HCT116 (cell line): ENCODE measurements at regions of chr20 and their contacts with region 1.

Region 1: GRCh38 chr20:45971675-45972499 is at the start of gene ZNF335:
- DNase-seq: peak; percentile 95
- ATAC-seq: peak; percentile 85
- H3K4me3 ChIP-seq: peak within 1 kb of the TSS; percentile 94 to 97
- H3K27ac ChIP-seq: peak within 1 kb of the TSS; percentile 100
- H3K4me1 ChIP-seq: peaks cover 11 to 24% of the 10 kb centered on the region in 2 experiments; a peak in 3 of 4 replicates
- H3K27me3 ChIP-seq: no peaks in the 10 kb centered on the region
- CTCF ChIP-seq: no peak
- POLR2A ChIP-seq: no peak
- RAD21 ChIP-seq: no peak
- total RNA-seq, gene ZNF335: 20.8 TPM

Region 2: GRCh38 chr20:45545754-45546453 is 426.0 kb before region 1 on chr20:
- CTCF ChIA-PET with region 1: no interaction called
- POLR2A ChIA-PET with region 1: no interaction called
- RAD21 ChIA-PET with region 1: no interaction called
- intact Hi-C with region 1: loop called (anchors 10 kb)
- DNase-seq: peak; percentile 21
- ATAC-seq: peak; percentile 81
- H3K4me3 ChIP-seq: no peak overlapping the region
- H3K27ac ChIP-seq: no peak overlapping the region
- H3K4me1 ChIP-seq: no peaks in the 10 kb centered on the region
- H3K27me3 ChIP-seq: peaks cover 49% of the 10 kb centered on the region; the same call in 1 of the 2 replicates
- CTCF ChIP-seq: peak; percentile 24 to 61 (median 59); a peak in 4 of 6 replicates
- POLR2A ChIP-seq: no peak
- RAD21 ChIP-seq: peak; percentile 81

Region 3: GRCh38 chr20:45798935-45799642 is 172.8 kb before region 1 on chr20:
- CTCF ChIA-PET with region 1: interaction called, 11 read pairs
- POLR2A ChIA-PET with region 1: no interaction called
- RAD21 ChIA-PET with region 1: no interaction called
- intact Hi-C with region 1: no loop called
- DNase-seq: no peak
- ATAC-seq: peak; percentile 97
- H3K4me3 ChIP-seq: no peak overlapping the region
- H3K27ac ChIP-seq: no peak overlapping the region
- H3K4me1 ChIP-seq: no peaks in the 10 kb centered on the region
- H3K27me3 ChIP-seq: no peaks in the 10 kb centered on the region
- CTCF ChIP-seq: peak; percentile 35 to 75 (median 72); a peak in 5 of 6 replicates
- POLR2A ChIP-seq: no peak
- RAD21 ChIP-seq: peak; percentile 64

Region 4: DNA sequence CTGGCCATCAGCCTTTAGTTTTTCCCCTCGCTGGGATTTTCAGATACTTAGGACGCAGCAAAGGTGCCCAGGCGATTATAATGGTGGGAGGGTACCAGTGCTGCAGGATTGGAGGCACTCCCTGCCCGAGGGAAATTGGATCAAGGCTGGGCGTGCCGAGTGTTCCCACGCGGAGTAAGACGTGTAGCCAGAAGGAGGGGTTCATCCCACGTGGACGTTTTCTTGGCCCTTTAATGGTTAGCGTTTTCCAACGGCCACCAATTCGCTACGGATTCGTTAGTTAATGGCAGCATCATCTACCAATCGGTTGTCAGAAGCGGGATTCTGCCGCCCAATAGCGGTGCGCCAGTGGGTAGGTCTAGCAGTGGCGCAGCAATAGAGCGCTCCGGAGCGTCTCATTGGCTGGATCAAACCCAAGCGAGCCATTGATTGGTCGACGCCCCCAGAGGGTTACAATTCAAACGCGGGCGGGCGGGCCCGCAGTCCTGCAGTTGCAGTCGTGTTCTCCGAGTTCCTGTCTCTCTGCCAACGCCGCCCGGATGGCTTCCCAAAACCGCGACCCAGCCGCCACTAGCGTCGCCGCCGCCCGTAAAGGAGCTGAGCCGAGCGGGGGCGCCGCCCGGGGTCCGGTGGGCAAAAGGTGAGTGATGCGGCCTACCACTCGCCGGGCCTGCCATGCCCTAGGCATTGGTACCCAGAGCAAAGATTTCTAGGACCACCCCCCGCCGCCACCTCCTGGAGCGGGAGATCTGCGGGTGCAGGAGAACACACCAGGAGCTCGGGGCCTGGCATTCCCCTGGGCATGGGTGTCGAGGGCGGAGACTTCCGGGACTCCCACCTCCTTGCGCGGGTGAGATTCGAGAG is 159.5 kb before region 1 on chr20 and contains the start of gene UBE2C:
- CTCF ChIA-PET with region 1: interaction called, 5 read pairs
- POLR2A ChIA-PET with region 1: no interaction called
- RAD21 ChIA-PET with region 1: no interaction called
- intact Hi-C with region 1: loop called (anchors 5 kb)
- DNase-seq: peak; percentile 100
- ATAC-seq: peak; percentile 97
- H3K4me3 ChIP-seq: peak within 1 kb of the TSS; percentile 85 to 100
- H3K27ac ChIP-seq: peak within 1 kb of the TSS; percentile 93
- H3K4me1 ChIP-seq: peaks cover 21 to 31% of the 10 kb centered on the region in 2 experiments; a peak in 3 of 4 replicates
- H3K27me3 ChIP-seq: no peaks in the 10 kb centered on the region
- CTCF ChIP-seq: no peak
- POLR2A ChIP-seq: peak; percentile 26
- RAD21 ChIP-seq: no peak
- total RNA-seq, gene UBE2C: 205 TPM

Region 5: GRCh38 chr20:45934586-45935415 is 37.1 kb before region 1 on chr20 and contains the start of gene PCIF1:
- CTCF ChIA-PET with region 1: interaction called, 30 read pairs
- POLR2A ChIA-PET with region 1: interaction called, 36 read pairs
- RAD21 ChIA-PET with region 1: no interaction called
- intact Hi-C with region 1: no loop called
- DNase-seq: peak; percentile 93
- ATAC-seq: peak; percentile 79
- H3K4me3 ChIP-seq: peak within 1 kb of the TSS; percentile 94 to 97
- H3K27ac ChIP-seq: peak within 1 kb of the TSS; percentile 100
- H3K4me1 ChIP-seq: peaks cover 4 to 32% of the 10 kb centered on the region in 2 experiments; a peak in 3 of 4 replicates
- H3K27me3 ChIP-seq: no peaks in the 10 kb centered on the region
- CTCF ChIP-seq: no peak
- POLR2A ChIP-seq: peak; percentile 89
- RAD21 ChIP-seq: no peak
- total RNA-seq, gene PCIF1: 31.8 TPM

Region 6: DNA sequence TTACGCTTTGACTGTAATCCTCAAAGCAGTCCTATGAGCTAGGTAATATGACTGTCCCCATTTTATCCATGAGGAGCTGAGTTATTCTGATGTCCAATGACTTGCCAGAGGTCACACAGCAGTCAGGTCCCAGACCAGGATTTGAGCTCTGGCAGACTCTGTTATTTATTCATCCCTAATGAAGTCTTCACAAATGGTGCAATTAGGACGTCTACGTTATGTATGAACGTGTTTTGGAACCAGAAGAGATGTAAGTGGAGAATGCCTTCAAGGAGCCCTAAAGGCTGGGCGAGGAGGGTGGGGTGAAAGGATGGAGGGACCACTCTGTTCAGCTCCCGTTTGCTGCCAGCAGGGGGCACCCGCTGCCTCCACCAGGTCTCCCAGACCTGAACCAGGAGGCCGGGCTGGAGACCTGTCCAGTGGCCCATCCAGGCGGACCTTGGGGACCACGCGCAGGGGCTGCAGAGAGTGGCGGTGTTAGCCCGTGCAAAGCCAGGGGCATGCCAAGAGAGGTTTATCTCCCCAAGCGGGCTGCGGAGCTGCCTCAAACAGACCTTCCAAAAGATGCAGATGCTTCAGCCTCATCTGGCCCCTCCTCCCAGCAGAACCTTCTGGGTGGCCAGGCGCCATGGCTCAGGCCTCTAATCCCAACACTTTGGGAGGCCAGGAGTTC is 15.4 kb after region 1 on chr20:
- CTCF ChIA-PET with region 1: interaction called, 46 read pairs
- POLR2A ChIA-PET with region 1: interaction called, 3 read pairs
- RAD21 ChIA-PET with region 1: no interaction called
- intact Hi-C with region 1: no loop called
- DNase-seq: peak; percentile 61
- ATAC-seq: peak; percentile 99
- H3K4me3 ChIP-seq: no peak overlapping the region
- H3K27ac ChIP-seq: no peak overlapping the region
- H3K4me1 ChIP-seq: peaks cover 0 to 6% of the 10 kb centered on the region in 2 experiments; a peak in 1 of 4 replicates
- H3K27me3 ChIP-seq: no peaks in the 10 kb centered on the region
- CTCF ChIP-seq: peak; percentile 85 to 96 (median 94)
- POLR2A ChIP-seq: no peak
- RAD21 ChIP-seq: peak; percentile 84

Region 7: GRCh38 chr20:46013826-46014516 is 42.1 kb after region 1 on chr20:
- CTCF ChIA-PET with region 1: interaction called, 10 read pairs
- POLR2A ChIA-PET with region 1: no interaction called
- RAD21 ChIA-PET with region 1: no interaction called
- intact Hi-C with region 1: no loop called
- DNase-seq: peak; percentile 56
- ATAC-seq: peak; percentile 92
- H3K4me3 ChIP-seq: peak overlapping the region; percentile 36 to 47
- H3K27ac ChIP-seq: peak overlapping the region; percentile 59; the same call in 1 of the 2 replicates
- H3K4me1 ChIP-seq: peaks cover 6 to 16% of the 10 kb centered on the region in 2 experiments; a peak in 3 of 4 replicates
- H3K27me3 ChIP-seq: no peaks in the 10 kb centered on the region
- CTCF ChIP-seq: peak; percentile 71 to 84 (median 79)
- POLR2A ChIP-seq: no peak
- RAD21 ChIP-seq: peak; percentile 68

Region 8: GRCh38 chr20:46179863-46180262 is 208.0 kb after region 1 on chr20:
- CTCF ChIA-PET with region 1: no interaction called
- POLR2A ChIA-PET with region 1: no interaction called
- RAD21 ChIA-PET with region 1: no interaction called
- intact Hi-C with region 1: no loop called
- DNase-seq: no peak
- ATAC-seq: no peak
- H3K4me3 ChIP-seq: no peak overlapping the region
- H3K27ac ChIP-seq: no peak overlapping the region
- H3K4me1 ChIP-seq: peaks cover 0 to 6% of the 10 kb centered on the region in 2 experiments; a peak in 1 of 4 replicates
- H3K27me3 ChIP-seq: no peaks in the 10 kb centered on the region
- CTCF ChIP-seq: no peak
- POLR2A ChIP-seq: no peak
- RAD21 ChIP-seq: no peak